ENCODE measurements at regions of chr19 and their contacts with region 1.

Region 1: DNA sequence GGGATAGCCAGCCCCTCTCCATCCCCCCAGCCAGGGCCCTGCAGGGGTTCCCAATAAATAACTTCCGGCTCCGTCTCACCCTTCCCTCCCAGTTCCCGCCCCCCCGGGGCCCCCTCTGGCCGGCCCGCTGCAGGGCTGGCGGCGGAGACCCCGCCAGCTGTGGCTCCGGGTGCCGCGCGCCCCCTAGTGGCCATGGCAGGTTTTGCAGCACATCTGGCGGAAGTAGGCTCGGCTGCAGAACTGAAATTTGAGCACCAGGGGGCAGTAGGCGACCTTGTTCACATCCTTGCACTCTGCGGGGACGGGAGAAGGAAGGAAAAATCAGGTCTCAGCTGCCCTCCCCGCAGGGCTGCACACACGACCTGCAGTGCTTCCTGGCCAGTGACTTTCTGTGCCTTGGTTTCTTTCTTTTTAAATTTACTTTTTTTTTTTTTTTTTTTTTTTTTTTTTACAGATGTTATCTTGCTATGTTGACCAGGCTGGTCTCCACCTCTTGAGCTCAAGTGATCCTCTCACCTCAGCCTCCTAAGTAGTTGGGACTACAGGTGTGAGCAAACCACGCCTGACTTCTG is 3.6 kb upstream of the MYO1F start:
- DNase-seq: peak; percentile 79 to 88 (median 80)
- H3K4me3 ChIP-seq: peak overlapping the region in 1 of 3 experiments; percentile 46
- H3K4me3 Mint-ChIP-seq: no peak overlapping the region
- H3K27ac ChIP-seq: peak overlapping the region in 1 of 2 donors; percentile 14
- H3K27ac Mint-ChIP-seq: peak overlapping the region in 1 of 7 donors; percentile 80
- H3K4me1 ChIP-seq: peaks cover 37 to 39% of the 10 kb centered on the region in 2 donors
- H3K4me1 Mint-ChIP-seq: peaks cover 28% of the 10 kb centered on the region
- H3K27me3 ChIP-seq: no peaks in the 10 kb centered on the region
- H3K27me3 Mint-ChIP-seq: peaks cover 0 to 2% (median 2%) of the 10 kb centered on the region in 3 donors
- CTCF ChIP-seq: peak; percentile 100

Region 2: GRCh38 chr19:8355631-8356402 is 225.0 kb before region 1 on chr19:
- intact Hi-C with region 1: loop called in 1 of 2 experiments (anchors 10 kb)
- DNase-seq: peak; percentile 22 to 67 (median 33)
- H3K4me3 ChIP-seq: no peak overlapping the region
- H3K4me3 Mint-ChIP-seq: no peak overlapping the region
- H3K27ac ChIP-seq: no peak overlapping the region
- H3K27ac Mint-ChIP-seq: peak overlapping the region in 1 of 7 donors; percentile 63
- H3K4me1 ChIP-seq: peaks cover 4 to 5% of the 10 kb centered on the region in 2 donors
- H3K4me1 Mint-ChIP-seq: peaks cover 15% of the 10 kb centered on the region
- H3K27me3 ChIP-seq: peaks cover 2 to 10% of the 10 kb centered on the region in 2 donors
- H3K27me3 Mint-ChIP-seq: peaks cover 24 to 46% (median 41%) of the 10 kb centered on the region in 3 donors
- CTCF ChIP-seq: no peak

Region 3: GRCh38 chr19:8544168-8544567 is 36.6 kb before region 1 on chr19:
- intact Hi-C with region 1: loop called (anchors 5 kb)
- DNase-seq: no peak
- H3K4me3 ChIP-seq: no peak overlapping the region
- H3K4me3 Mint-ChIP-seq: no peak overlapping the region
- H3K27ac ChIP-seq: no peak overlapping the region
- H3K27ac Mint-ChIP-seq: no peak overlapping the region
- H3K4me1 ChIP-seq: peaks cover 16 to 24% of the 10 kb centered on the region in 2 donors
- H3K4me1 Mint-ChIP-seq: peaks cover 17% of the 10 kb centered on the region
- H3K27me3 ChIP-seq: no peaks in the 10 kb centered on the region
- H3K27me3 Mint-ChIP-seq: no peaks in the 10 kb centered on the region
- CTCF ChIP-seq: no peak

Region 4: DNA sequence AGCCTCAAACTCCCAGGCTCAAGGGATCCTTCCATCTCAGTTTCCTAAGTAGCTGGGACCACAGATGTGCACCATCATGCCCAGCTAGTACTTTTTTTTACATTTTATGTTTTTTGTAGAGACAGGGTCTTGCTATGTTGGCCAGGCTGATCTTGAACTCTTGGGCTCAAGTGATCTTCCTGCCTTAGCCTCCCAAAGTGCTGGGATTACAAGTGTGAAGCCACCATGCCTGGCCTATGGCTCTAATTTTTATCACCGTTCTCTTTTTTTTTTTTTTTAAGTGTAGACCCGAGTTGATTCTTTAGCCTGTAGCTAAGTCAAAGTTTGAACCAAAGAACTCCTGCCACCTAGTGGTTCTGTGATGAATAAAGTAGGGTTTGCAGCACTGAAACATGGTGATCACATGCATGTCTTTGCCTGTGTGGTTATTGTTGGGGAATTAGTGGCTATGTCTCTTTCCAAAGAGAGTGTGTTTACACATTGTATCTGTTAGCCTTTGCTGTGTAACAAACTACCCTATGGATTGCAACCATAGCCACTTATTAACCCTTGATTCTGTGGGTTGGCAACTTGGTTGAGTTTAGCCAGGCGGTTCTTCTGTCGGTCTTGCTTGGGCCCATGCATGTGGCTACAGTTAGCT is 61.2 kb after region 1 on chr19:
- intact Hi-C with region 1: loop called in 1 of 2 experiments (anchors 10 kb)
- DNase-seq: peak; percentile 52 to 67 (median 63)
- H3K4me3 ChIP-seq: no peak overlapping the region
- H3K4me3 Mint-ChIP-seq: no peak overlapping the region
- H3K27ac ChIP-seq: peak overlapping the region in 1 of 2 donors; percentile 92
- H3K27ac Mint-ChIP-seq: peak overlapping the region; percentile 77 to 99 (median 97)
- H3K4me1 ChIP-seq: peaks cover 85 to 99% of the 10 kb centered on the region in 2 donors
- H3K4me1 Mint-ChIP-seq: peaks cover 91% of the 10 kb centered on the region
- H3K27me3 ChIP-seq: no peaks in the 10 kb centered on the region
- H3K27me3 Mint-ChIP-seq: peaks cover 0 to 9% (median 2%) of the 10 kb centered on the region in 3 donors
- CTCF ChIP-seq: peak; percentile 60

Region 5: GRCh38 chr19:8832132-8833021 is 251.6 kb after region 1 on chr19 and contains the starts of genes MBD3L1 and ZNF558:
- intact Hi-C with region 1: loop called in 1 of 2 experiments (anchors 10 kb)
- DNase-seq: peak; percentile 98 to 99 (median 98)
- H3K4me3 ChIP-seq: peak within 1 kb of the TSS; percentile 65 to 92 (median 82)
- H3K4me3 Mint-ChIP-seq: peak within 1 kb of the TSS; percentile 85 to 91
- H3K27ac ChIP-seq: peak within 1 kb of the TSS; percentile 80 to 91
- H3K27ac Mint-ChIP-seq: peak within 1 kb of the TSS; percentile 86 to 96 (median 94)
- H3K4me1 ChIP-seq: peaks cover 11 to 18% of the 10 kb centered on the region in 2 donors
- H3K4me1 Mint-ChIP-seq: peaks cover 16% of the 10 kb centered on the region
- H3K27me3 ChIP-seq: no peaks in the 10 kb centered on the region
- H3K27me3 Mint-ChIP-seq: peaks cover 2 to 3% (median 3%) of the 10 kb centered on the region in 3 donors
- CTCF ChIP-seq: peak; percentile 46
- polyA plus RNA-seq, gene MBD3L1: not detected
- polyA plus RNA-seq, gene ZNF558: 3.7 to 22.1 (median 5.6) TPM

Measured in CD14-positive monocyte (primary cell).